WTC11 (cell line): ENCODE measurements at regions of chr3 and their contacts with region 1.

Region 1: GRCh38 chr3:126134219-126134975 is 46.0 kb downstream of the ALDH1L1 start:
- DNase-seq: peak; percentile 80
- ATAC-seq: peak; percentile 76
- H3K4me3 Mint-ChIP-seq: 0 out of 2 replicates have a peak overlapping the region, but pooled peaks have one; percentile 22
- H3K27ac Mint-ChIP-seq: peak overlapping the region; percentile 81; the same call in 1 of the 2 replicates
- H3K4me1 Mint-ChIP-seq: peaks cover 22% of the 10 kb centered on the region
- H3K27me3 Mint-ChIP-seq: peaks cover 22% of the 10 kb centered on the region
- CTCF ChIP-seq: peak; percentile 81

Region 2: GRCh38 chr3:126077754-126078153 is 56.6 kb before region 1 on chr3:
- CTCF ChIA-PET with region 1: no interaction called
- POLR2A ChIA-PET with region 1: no interaction called
- DNase-seq: no peak
- ATAC-seq: no peak
- H3K4me3 Mint-ChIP-seq: no peak overlapping the region
- H3K27ac Mint-ChIP-seq: no peak overlapping the region
- H3K4me1 Mint-ChIP-seq: no peaks in the 10 kb centered on the region
- H3K27me3 Mint-ChIP-seq: no peaks in the 10 kb centered on the region
- CTCF ChIP-seq: no peak

Region 3: GRCh38 chr3:126100634-126101301 is 33.6 kb before region 1 on chr3:
- CTCF ChIA-PET with region 1: interaction called, 55 read pairs
- POLR2A ChIA-PET with region 1: no interaction called
- DNase-seq: no peak
- ATAC-seq: no peak
- H3K4me3 Mint-ChIP-seq: no peak overlapping the region
- H3K27ac Mint-ChIP-seq: no peak overlapping the region
- H3K4me1 Mint-ChIP-seq: no peaks in the 10 kb centered on the region
- H3K27me3 Mint-ChIP-seq: no peaks in the 10 kb centered on the region; the same call in none of the 2 replicates
- CTCF ChIP-seq: no peak

Region 4: GRCh38 chr3:126124148-126124868 is 10.1 kb before region 1 on chr3:
- CTCF ChIA-PET with region 1: interaction called, 39 read pairs
- POLR2A ChIA-PET with region 1: no interaction called
- DNase-seq: peak; percentile 49
- ATAC-seq: peak; percentile 79
- H3K4me3 Mint-ChIP-seq: no peak overlapping the region
- H3K27ac Mint-ChIP-seq: no peak overlapping the region
- H3K4me1 Mint-ChIP-seq: peaks cover 14% of the 10 kb centered on the region
- H3K27me3 Mint-ChIP-seq: no peaks in the 10 kb centered on the region
- CTCF ChIP-seq: no peak

Region 5: GRCh38 chr3:126166009-126166408 is 31.6 kb after region 1 on chr3:
- CTCF ChIA-PET with region 1: interaction called, 16 read pairs
- POLR2A ChIA-PET with region 1: no interaction called
- DNase-seq: no peak
- ATAC-seq: no peak
- H3K4me3 Mint-ChIP-seq: no peak overlapping the region
- H3K27ac Mint-ChIP-seq: no peak overlapping the region
- H3K4me1 Mint-ChIP-seq: peaks cover 17% of the 10 kb centered on the region
- H3K27me3 Mint-ChIP-seq: no peaks in the 10 kb centered on the region
- CTCF ChIP-seq: no peak

Region 6: DNA sequence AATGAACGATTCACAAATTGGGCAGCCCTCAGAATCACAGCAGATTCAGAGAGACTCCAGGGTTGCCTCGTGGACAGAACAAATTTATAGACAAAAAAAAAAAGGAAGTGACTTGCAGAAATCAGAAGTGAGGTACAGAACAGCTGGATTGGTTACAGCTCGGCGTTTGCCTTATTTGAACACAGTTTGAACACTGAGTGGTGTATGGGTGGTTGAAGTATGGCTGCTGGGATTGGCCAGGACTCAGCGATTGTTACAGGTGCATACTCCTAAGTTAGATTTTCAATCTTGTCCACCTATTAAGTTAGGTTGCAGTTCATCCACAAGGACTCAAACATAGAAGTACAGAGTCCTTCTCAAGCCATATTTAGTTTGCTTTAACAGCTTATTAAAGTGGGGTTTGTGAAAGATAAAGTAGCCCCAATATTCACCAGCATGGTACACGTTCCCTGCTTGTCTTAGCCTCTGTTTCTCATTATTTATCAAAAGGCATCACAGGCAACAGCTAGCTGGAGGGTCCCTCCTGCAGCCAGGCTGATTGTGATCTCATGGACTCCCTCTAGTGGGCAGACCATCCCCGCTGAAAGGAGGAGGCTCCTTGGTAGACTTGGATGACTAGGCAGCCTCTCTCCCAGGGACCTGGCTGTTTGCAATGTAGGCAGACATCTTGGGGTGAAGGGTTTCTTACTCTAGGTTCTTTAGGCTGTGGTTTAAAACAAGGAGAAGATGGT is 63.6 kb after region 1 on chr3:
- CTCF ChIA-PET with region 1: interaction called, 39 read pairs
- POLR2A ChIA-PET with region 1: no interaction called
- DNase-seq: peak; percentile 80
- ATAC-seq: peak; percentile 97
- H3K4me3 Mint-ChIP-seq: no peak overlapping the region
- H3K27ac Mint-ChIP-seq: no peak overlapping the region
- H3K4me1 Mint-ChIP-seq: peaks cover 6% of the 10 kb centered on the region; the same call in 1 of the 2 replicates
- H3K27me3 Mint-ChIP-seq: peaks cover 10% of the 10 kb centered on the region; the same call in 1 of the 2 replicates
- CTCF ChIP-seq: peak; percentile 45

Region 7: GRCh38 chr3:126245811-126246727 is 111.7 kb after region 1 on chr3:
- CTCF ChIA-PET with region 1: interaction called, 16 read pairs
- POLR2A ChIA-PET with region 1: no interaction called
- DNase-seq: peak; percentile 60
- ATAC-seq: peak; percentile 88
- H3K4me3 Mint-ChIP-seq: no peak overlapping the region
- H3K27ac Mint-ChIP-seq: no peak overlapping the region
- H3K4me1 Mint-ChIP-seq: peaks cover 3% of the 10 kb centered on the region; the same call in 1 of the 2 replicates
- H3K27me3 Mint-ChIP-seq: peaks cover 4% of the 10 kb centered on the region; the same call in 1 of the 2 replicates
- CTCF ChIP-seq: peak; percentile 53

Region 8: DNA sequence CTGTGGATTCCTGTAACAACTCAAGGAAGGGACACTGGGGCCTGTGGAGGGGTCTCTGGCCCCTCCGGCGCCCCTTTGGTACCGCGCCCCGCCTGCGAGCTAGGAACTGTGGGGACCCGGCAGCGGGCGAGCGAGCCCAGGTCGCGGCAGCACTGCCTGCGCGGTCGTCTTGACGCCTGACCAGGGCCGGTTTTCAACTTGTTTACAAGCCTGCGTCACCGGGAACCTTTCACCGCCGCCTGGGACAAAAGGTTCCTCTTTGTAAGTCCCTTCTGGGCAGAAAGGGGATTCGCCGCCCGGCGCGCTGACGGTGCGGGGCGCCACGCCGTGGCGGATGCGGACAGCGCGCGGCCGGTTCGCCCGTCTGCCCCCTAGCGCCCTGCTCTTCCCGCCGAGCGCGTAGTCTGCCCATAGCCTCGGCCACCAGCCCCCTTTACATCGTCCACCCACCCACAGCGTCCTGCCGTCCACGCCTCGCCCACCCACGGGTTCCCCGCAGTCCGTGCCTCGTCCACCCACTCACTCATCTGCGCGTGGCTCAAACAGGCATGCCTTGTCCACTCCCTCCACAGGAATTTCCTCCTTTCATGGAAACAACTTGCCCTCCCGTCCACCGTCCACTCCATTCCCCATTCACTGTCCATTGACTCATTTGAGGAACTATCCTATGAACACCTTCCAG is 254.9 kb after region 1 on chr3:
- CTCF ChIA-PET with region 1: interaction called, 15 read pairs
- POLR2A ChIA-PET with region 1: no interaction called
- DNase-seq: peak; percentile 89
- ATAC-seq: peak; percentile 91
- H3K4me3 Mint-ChIP-seq: peak overlapping the region; percentile 52
- H3K27ac Mint-ChIP-seq: 0 out of 2 replicates have a peak overlapping the region, but pooled peaks have one; percentile 16
- H3K4me1 Mint-ChIP-seq: peaks cover 13% of the 10 kb centered on the region
- H3K27me3 Mint-ChIP-seq: peaks cover 34% of the 10 kb centered on the region
- CTCF ChIP-seq: peak; percentile 31; the same call in 1 of the 2 replicates